HEK293 (cell line): ENCODE measurements at regions of chr1 and their contacts with region 1.

Region 1: GRCh38 chr1:8848663-8849386 is 29.7 kb downstream of the ENO1 start:
- H3K4me3 ChIP-seq: no peak overlapping the region
- H3K27ac ChIP-seq: no peak overlapping the region
- H3K4me1 ChIP-seq: 0 out of 2 replicates have a peak, but pooled peaks cover 2% of the 10 kb centered on the region
- CTCF ChIP-seq: peak; percentile 86

Region 2: DNA sequence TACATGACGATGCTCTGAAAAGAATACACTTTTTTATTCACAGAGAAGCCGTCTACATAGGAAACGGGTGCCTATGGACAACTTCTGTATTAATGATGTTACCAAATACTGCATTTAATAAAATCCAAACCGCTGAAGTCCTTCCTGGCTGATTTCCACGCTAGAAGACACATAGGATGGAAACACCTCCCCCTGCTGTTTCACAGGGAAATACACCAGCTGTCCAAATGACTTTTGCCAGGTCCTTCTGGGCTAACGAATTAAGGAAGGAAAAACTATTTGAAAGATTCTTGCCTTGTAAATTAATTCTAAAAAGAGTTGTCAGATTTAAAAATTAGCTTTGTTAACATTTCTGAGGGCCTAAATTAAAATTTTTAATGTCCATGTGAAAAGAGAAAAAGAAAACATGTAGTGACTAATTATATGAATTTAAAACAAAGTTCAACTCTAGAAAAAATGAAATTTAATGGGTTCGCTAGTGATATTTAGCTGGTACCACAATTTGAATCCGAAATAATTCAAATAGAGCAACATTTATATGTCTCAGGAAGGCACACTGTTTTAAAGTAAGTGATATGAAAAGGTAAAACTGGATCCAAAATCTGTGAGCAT is 177.4 kb before region 1 on chr1:
- CTCF ChIA-PET with region 1: interaction called, 12 read pairs
- POLR2A ChIA-PET with region 1: no interaction called
- H3K4me3 ChIP-seq: no peak overlapping the region
- H3K27ac ChIP-seq: no peak overlapping the region
- H3K4me1 ChIP-seq: peaks cover 35% of the 10 kb centered on the region
- CTCF ChIP-seq: peak; percentile 51; the same call in 1 of the 2 replicates

Region 3: GRCh38 chr1:8718850-8719361 is 129.9 kb before region 1 on chr1:
- CTCF ChIA-PET with region 1: interaction called, 13 read pairs
- POLR2A ChIA-PET with region 1: interaction called, 3 read pairs
- H3K4me3 ChIP-seq: no peak overlapping the region
- H3K27ac ChIP-seq: no peak overlapping the region
- H3K4me1 ChIP-seq: peaks cover 21% of the 10 kb centered on the region
- CTCF ChIP-seq: peak; percentile 27

Region 4: DNA sequence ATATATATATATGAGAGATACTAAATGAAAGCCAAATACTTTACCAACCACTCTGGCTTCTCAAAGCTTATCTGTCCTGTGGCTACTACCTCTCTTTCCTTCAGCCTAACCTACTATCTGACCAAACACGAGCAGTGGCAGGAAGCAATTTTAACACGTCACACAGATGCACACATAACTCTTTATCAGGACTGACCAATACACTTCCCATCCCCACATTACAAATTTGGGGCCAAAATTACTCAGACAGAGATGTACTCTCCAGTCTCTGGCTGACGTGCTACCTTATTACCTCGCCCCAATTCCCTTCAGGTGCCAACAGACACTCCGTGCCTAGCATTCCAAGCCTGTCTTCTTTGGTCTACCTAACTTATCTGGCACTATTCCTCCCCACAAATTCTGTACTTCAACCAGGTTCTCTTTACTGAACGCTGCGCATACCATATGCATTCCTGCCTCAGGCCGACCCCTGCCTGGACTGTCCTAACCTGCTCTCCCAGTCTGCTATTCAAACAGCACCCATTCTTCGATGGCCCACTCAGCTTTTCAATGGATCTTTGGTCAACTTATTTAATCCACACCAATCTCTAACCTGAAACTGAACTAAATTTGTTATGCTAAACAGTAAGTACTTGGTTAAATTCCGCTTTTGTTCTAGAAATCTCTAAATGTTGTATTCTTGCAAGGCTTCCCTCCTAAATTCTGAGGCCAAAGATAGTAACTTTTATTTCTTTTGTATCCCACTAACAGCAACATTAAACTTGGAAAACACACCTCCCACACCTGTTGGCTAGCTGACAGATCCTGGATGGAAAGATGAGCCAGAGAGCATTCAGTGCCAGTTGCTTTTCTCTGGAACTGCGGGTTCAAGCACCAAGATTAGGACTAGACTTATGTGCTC is 59.3 kb before region 1 on chr1:
- CTCF ChIA-PET with region 1: interaction called, 11 read pairs
- POLR2A ChIA-PET with region 1: no interaction called
- H3K4me3 ChIP-seq: no peak overlapping the region
- H3K27ac ChIP-seq: no peak overlapping the region
- H3K4me1 ChIP-seq: peaks cover 6% of the 10 kb centered on the region
- CTCF ChIP-seq: no peak

Region 5: DNA sequence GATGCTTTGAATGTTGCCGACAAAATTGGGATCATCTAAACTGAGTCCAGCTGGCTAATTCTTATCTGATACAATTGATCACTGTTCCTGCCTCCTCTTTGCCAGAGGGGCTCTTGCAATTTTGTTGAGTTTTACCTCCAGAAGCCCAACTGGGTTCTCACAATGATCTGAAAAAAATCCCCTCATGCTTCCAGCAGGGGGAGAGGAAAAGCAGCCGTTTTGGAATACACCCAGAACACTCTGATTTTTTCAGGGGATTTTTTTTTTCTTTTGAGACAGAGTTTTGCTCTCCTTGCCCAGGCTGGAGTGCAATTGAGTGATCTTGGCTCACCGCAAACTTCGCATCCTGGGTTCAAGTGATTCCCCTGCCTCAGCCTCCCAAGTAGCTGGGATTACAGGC is 17.5 kb before region 1 on chr1:
- CTCF ChIA-PET with region 1: interaction called, 40 read pairs
- POLR2A ChIA-PET with region 1: interaction called, 6 read pairs
- H3K4me3 ChIP-seq: no peak overlapping the region
- H3K27ac ChIP-seq: no peak overlapping the region
- H3K4me1 ChIP-seq: peaks cover 7% of the 10 kb centered on the region
- CTCF ChIP-seq: no peak